ENCODE measurements at regions of chr5 and their contacts with region 1.

Region 1: DNA sequence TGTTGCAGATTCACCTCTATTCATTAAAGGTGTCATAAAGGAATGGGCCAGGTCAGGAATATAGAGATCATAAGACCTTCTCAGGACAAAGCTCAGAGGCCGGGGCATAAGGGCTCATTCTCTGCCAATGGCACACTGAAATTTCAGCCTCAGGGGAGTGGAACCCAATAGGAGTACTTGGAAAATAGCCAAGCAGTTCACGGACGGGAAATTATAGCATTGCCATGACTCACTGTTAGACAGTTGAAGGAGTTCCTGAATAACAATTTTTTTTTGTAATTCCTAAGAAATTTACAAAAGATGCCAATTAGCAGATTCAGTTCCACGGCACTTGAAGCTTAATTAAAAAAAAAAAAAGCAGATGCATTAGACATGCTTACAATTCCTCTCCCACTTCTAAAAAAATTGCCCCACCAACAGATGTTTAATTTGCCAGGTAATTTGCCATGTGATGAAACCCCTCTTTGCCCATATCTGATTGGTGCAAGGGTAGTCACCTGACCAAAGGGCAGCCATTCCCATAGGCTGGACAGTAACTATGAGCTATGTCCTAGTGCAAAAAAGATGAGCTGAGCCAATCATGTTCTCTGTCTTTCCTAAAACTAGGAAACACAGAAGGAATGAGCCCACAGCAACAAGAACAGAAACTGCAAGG is 58.6 kb downstream of the PTCD2 start:
- DNase-seq: no peak
- ATAC-seq: peak; percentile 50

Region 2: GRCh38 chr5:73280821-73281746 is 902.3 kb after region 1 on chr5:
- intact Hi-C with region 1: loop called (anchors 5 kb)
- DNase-seq: peak; percentile 70
- ATAC-seq: peak; percentile 65

Measured in sciatic nerve (tissue), 2 donors.